HEK293T (cell line): ENCODE measurements at regions of chr11 and their contacts with region 1.

Region 1: DNA sequence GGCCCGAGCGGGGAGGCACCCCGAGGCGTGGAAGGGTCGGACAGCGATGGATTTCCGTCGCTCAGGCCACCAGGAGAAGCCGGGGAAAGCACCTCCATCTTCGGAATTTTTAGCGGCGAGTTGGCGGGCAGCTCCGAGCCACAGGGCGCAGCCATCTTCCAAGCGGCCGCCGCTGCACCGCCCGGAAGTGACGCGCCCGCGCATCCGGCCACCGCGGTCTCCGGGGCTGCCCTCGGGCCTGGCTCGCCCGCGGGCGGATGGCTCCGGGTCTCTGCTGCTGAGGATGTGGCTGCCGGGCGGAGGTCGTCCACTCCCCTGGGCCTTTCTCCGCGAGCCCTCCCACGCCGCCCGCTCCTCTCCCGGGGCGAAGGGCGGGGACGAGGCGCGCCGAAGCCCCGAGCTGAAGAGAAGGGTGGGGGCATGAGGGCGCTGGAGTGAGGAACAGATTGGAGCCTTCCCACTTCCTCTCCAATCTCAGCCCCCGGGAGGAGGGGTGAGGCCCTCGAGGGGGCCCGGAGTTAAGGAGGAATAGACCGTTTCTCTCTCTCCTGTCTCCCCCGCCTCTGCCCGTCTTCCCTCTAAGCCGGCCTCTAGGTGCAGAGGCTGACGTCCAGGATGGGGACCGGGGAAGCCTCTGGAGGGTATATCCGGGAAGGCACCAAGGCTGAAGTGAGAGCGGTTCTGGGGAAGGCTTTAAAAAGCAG is at the start of gene MSANTD2:
- DNase-seq: peak; percentile 89

Region 2: DNA sequence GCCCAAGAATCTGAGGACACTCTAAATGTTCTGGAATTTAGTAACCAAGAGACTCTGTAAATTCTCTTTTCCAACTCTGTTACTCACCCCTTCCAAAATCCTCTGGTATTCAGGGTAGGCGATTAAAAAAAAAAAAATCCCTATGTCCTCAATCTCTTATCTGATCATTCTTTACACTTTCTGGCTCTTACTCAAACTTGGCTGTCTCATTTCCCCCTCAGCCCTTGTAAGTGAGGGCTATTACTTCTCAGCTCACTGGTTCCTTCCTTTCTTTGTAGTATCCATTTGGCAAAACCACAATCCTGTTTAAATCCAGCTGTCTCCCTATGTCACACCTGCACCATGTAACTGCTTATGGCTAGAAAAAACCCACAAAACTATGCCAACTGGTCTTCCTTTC is 12.5 kb after region 1 on chr11:
- CTCF ChIA-PET with region 1: interaction called, 3 read pairs
- POLR2A ChIA-PET with region 1: interaction called, 19 read pairs
- DNase-seq: no peak